ENCODE measurements at regions of chr12 and their contacts with region 1.

Region 1: GRCh38 chr12:12081836-12082497 is 11.2 kb downstream of the BCL2L14 start:
- DNase-seq: no peak
- H3K4me3 ChIP-seq: no peak overlapping the region
- H3K27ac ChIP-seq: peak overlapping the region in 4 of 8 donors; percentile 42 to 56 (median 50)
- H3K4me1 ChIP-seq: peaks cover 0 to 9% (median 0%) of the 10 kb centered on the region in 6 donors
- H3K27me3 ChIP-seq: no peaks in the 10 kb centered on the region
- CTCF ChIP-seq: peak in 5 of 11 experiments; percentile 17 to 46 (median 37)
- POLR2A ChIP-seq: no peak

Region 2: GRCh38 chr12:12327802-12328201 is 245.8 kb after region 1 on chr12:
- intact Hi-C with region 1: loop called (anchors 10 kb)
- DNase-seq: no peak
- H3K4me3 ChIP-seq: no peak overlapping the region
- H3K27ac ChIP-seq: peak overlapping the region in 4 of 8 donors; percentile 5 to 35 (median 14)
- H3K4me1 ChIP-seq: peaks cover 3 to 16% (median 10%) of the 10 kb centered on the region in 6 donors
- H3K27me3 ChIP-seq: no peaks in the 10 kb centered on the region
- CTCF ChIP-seq: peak; percentile 36 to 74 (median 63)
- POLR2A ChIP-seq: no peak

Region 3: DNA sequence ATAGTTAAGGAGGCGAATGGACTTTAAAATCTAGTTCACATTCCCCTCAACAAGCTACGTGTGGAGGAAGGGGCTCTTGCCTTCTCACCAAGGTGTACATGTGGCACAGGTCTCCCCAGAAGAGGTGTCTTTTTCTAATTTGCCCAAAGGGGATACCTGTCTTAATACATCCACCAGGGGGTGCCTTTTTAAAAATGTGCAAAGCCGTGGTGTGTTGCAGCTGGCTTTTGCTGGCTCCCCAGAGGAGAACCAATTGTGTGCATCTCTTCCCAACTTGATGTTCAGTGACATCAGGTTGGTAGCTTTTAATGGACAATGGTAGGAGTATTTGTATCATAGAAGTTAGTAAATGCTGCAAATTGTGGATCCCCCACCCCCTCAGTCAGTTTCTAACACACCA is 563.5 kb after region 1 on chr12:
- intact Hi-C with region 1: no loop called
- DNase-seq: no peak
- H3K4me3 ChIP-seq: no peak overlapping the region
- H3K27ac ChIP-seq: no peak overlapping the region
- H3K4me1 ChIP-seq: no peaks in the 10 kb centered on the region
- H3K27me3 ChIP-seq: no peaks in the 10 kb centered on the region
- CTCF ChIP-seq: peak in 10 of 11 experiments; percentile 28 to 67 (median 57)
- POLR2A ChIP-seq: no peak